ENCODE measurements at regions of chr9 and their contacts with region 1.

Region 1: DNA sequence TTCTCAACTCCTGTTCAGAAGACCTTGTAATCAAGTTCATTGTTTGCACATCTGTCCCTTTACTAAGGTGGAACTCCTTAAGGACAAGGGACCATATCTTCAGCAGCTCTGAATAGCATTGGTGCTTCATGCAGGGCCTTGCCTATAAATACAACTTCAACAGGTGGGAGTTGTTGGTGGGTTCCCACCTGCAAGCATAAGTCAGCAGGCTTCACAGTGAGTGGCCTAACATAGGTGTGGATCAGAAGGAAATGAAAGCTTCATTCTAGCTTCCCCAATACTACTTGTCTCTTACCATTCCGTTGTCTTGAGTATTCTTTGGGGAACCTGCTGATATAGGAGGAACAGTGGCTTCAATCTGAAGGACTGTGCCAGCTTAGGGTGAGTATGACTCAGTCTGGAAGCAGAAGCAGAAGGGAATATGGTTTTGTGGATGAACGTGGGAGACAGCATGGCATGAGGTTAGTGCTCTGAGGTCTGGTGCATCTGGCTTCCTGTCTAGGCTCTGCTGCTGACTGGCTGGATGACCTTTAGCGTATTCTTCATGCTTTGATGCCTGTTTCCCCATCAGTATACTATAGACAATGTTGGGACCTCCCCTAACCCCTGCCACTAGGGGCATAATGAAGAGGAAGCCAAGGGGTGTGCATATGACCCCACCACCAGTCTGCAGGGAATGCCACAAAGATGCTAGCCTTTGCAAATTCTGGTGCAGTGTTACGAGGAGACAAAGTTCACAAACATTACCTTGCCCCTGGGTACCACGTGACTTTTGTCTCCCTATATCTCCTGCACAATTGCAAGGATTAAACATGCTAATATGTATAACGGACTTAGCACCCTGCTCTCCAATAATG is 192.3 kb downstream of the PALM2AKAP2 start:
- H3K4me3 Mint-ChIP-seq: peak overlapping the region; percentile 14
- H3K27ac Mint-ChIP-seq: peak overlapping the region; percentile 53
- H3K4me1 Mint-ChIP-seq: peaks cover 84% of the 10 kb centered on the region
- H3K27me3 Mint-ChIP-seq: peaks cover 4% of the 10 kb centered on the region

Region 2: DNA sequence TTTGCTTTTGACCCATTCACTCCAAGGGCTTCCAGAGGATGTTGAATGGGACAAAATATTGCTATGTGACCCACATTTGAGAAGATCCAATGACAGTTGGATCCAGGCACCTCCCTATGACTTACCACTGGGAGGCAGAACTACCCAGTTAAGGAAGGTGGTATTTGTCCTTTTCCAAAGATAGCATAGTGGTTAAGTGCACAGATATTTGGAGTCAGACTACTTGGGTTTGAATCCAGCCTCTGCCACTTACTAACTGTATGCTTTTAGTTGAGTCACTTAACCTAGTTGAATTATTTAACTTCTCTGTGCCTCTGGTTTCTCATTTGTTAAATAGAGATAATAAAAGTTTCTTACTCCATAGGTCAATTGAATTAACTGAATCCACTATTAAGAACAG is 266.7 kb before region 1 on chr9:
- intact Hi-C with region 1: no loop called
- H3K4me3 Mint-ChIP-seq: no peak overlapping the region
- H3K27ac Mint-ChIP-seq: no peak overlapping the region
- H3K4me1 Mint-ChIP-seq: no peaks in the 10 kb centered on the region
- H3K27me3 Mint-ChIP-seq: peaks cover 10% of the 10 kb centered on the region

Region 3: GRCh38 chr9:109926421-109926869 is 45.8 kb before region 1 on chr9:
- intact Hi-C with region 1: loop called (anchors 5 kb)
- H3K4me3 Mint-ChIP-seq: no peak overlapping the region
- H3K27ac Mint-ChIP-seq: no peak overlapping the region
- H3K4me1 Mint-ChIP-seq: peaks cover 20% of the 10 kb centered on the region
- H3K27me3 Mint-ChIP-seq: peaks cover 15% of the 10 kb centered on the region

Region 4: DNA sequence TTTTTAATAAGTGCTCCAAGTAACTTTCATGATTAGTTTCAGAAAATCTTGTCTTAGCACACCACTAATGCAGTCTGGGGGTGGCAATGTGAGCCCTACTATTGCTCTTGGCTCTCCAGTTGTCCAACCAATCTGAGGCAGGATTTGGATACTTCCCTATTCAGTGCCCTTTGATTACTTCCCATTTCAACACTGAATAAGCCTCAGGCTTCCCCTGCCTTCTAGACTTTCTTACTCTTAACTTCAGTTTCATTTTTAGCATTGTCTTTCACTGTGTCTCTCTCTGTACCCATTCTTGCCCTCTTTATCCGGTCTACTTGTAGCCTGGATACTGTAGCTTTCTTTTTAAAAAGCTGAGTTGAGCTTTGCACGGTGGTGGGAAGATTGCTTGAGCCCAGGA is 49.6 kb after region 1 on chr9:
- intact Hi-C with region 1: loop called (anchors 2 kb)
- H3K4me3 Mint-ChIP-seq: peak overlapping the region; percentile 39
- H3K27ac Mint-ChIP-seq: peak overlapping the region; percentile 76
- H3K4me1 Mint-ChIP-seq: peaks cover 25% of the 10 kb centered on the region
- H3K27me3 Mint-ChIP-seq: peaks cover 45% of the 10 kb centered on the region

Region 5: GRCh38 chr9:110048403-110048975 is 76.2 kb after region 1 on chr9:
- intact Hi-C with region 1: loop called (anchors 5 kb)
- H3K4me3 Mint-ChIP-seq: peak overlapping the region; percentile 87
- H3K27ac Mint-ChIP-seq: peak overlapping the region; percentile 47
- H3K4me1 Mint-ChIP-seq: peaks cover 35% of the 10 kb centered on the region
- H3K27me3 Mint-ChIP-seq: peaks cover 33% of the 10 kb centered on the region

Measured in dendritic cell treated with granulocyte-macrophage colony-stimulating factor and Interleukin-4, amounts not matched to agents 40 ng/mL and 50 ng/mL, for 4 days (primary cell).